ENCODE measurements at regions of chr15 and their contacts with region 1.

Region 1: GRCh38 chr15:95604634-95605036 is 725.9 kb upstream of the NR2F2 start:
- DNase-seq: no peak
- ATAC-seq: peak; percentile 26

Region 2: GRCh38 chr15:95284933-95285421 is 319.7 kb before region 1 on chr15:
- intact Hi-C with region 1: loop called (anchors 5 kb)
- DNase-seq: no peak
- ATAC-seq: no peak

Region 3: DNA sequence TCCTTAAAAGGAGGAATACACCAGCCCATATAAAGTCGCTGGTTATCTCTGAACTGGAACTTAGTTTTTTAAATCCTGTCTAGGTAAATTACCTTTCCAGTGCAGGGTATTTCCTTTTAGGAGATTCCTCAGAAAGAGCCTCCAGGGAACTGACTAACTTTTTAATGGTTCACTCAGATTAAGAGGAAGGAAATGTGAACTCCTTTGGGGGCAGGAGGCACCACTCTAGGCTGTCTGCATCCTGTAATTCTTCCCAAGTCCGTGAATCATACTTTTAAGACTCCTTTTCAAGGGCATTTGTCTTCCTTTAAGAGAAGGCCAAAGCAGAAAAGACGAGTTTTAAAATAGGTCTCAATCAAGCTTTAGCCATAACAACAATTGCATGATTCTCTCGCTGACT is 145.4 kb before region 1 on chr15:
- intact Hi-C with region 1: loop called (anchors 5 kb)
- DNase-seq: no peak
- ATAC-seq: no peak

Region 4: DNA sequence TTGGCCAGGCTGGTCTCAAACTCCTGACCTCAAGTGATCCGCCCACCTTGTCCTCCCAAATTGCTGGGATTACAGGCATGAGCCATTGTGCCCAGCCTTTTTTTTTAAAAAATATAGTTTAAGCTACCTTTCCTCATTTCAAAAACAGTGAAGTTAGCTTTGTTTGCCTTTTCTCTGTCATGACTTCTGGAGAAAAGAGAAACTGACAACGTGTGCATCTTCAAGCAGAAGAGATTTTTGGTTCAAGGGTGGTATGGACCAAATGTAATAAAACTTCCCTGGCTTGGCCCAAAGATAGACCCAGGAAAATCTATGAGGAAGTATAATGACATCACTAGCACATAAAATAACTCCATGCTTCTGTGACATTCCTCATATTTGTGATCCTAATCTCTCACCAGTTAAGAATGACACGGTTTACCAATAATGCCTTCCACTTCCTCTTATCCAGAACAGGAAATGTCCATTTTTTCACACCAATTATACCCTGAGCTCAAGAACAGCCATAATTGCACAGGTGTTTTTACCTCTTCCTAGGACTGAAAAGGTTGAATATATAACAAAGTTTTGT is 55.4 kb before region 1 on chr15:
- intact Hi-C with region 1: no loop called
- DNase-seq: no peak
- ATAC-seq: no peak

Region 5: DNA sequence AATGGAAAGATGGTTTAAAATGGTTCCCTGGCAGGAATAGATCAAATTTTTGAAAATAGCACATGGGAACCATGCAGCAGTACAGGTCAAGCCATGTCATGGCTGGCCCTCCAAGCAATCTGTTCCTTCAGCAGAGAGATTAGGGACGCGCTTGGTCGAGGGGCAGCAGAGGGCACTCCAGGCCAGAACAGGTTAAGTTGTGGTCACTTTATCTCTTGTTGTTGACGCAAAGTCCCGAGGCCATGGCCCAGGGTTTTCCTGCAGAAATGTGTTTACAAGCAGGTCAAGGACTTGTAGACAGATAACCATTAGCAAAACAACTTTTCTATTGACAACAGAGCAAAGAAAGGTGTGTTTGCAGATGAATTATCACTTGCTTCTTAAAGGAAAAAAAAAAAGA is 155.9 kb after region 1 on chr15:
- intact Hi-C with region 1: no loop called
- DNase-seq: no peak
- ATAC-seq: no peak